Activated T-helper 1 cell treated with anti-CD3 and anti-CD28 coated beads, Interleukin-12 subunit alpha, Interleukin-12 subunit beta, Interleukin-2, Interleukin-4 antibody, amounts not matched to agents 30 ng/mL and 10 ng/mL and 1 ng/mL, durations not matched to agents 14 hours and 24 hours and 36 hours (primary cell): ENCODE measurements at regions of chr7 and their contacts with region 1.

Region 1: DNA sequence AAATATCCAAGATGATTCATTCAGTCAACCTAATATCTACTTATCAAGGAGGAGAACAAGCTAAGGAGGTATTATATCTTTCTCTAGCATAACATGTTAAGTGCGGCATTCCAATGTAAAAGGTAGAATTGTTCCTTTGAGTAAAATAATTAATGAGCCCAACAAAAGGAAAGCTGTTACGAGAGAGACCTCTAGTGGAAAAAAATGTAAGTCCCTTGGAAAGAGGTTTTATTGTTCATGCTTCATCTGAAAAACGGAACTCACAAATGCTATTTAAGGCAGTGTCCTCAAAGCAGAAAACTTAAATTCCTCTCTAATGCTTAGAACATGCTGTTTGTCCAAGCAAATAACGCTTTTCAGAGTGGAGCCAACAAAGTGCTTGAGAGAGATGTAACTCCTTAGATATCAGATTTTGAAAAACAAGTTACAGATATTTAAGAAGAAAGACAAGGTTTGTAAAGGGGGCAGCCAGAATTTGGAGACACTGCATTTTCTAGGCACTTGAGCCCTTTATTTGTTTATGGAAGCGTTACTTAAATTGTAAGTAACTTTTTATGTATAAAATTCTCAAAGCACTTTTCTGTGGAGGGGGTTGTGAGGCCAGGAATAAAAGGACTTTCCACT is 119.9 kb downstream of the TFEC start:
- DNase-seq: no peak
- H3K4me3 Mint-ChIP-seq: no peak overlapping the region
- H3K27ac Mint-ChIP-seq: no peak overlapping the region
- H3K4me1 Mint-ChIP-seq: no peaks in the 10 kb centered on the region
- H3K27me3 Mint-ChIP-seq: peaks cover 3% of the 10 kb centered on the region

Region 2: DNA sequence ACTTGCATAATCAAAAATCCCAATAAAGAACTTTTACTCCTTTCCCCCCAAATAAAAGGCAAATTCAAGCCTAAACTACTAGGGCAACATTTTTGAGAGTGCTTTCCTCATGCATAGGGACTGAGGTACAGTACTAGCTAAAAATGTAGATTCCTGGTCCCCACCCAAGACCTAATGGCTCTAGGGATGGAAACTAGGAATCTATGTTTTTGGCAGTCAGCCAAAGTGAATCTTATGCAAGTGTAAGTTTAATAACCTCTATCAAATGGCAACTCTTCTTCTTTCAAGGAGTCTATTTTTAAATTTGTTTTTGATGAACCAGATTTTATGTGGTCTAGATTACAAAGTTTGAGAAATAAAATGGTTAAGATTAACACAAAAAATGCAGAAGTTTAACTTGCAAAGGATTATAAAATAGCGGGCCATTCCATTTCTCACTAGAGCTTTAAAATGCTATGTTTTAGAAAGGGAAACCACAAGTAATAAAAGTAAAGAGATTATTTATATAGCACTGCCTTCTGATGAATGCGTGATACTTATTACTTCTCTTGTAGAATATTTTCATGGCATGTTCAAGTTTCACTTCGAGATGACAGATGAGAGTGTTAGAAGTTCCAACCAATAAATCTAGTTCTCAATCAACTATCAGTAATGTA is 1059.1 kb before region 1 on chr7:
- intact Hi-C with region 1: loop called (anchors 5 kb)
- DNase-seq: no peak
- H3K4me3 Mint-ChIP-seq: no peak overlapping the region
- H3K27ac Mint-ChIP-seq: no peak overlapping the region
- H3K4me1 Mint-ChIP-seq: no peaks in the 10 kb centered on the region
- H3K27me3 Mint-ChIP-seq: no peaks in the 10 kb centered on the region

Region 3: DNA sequence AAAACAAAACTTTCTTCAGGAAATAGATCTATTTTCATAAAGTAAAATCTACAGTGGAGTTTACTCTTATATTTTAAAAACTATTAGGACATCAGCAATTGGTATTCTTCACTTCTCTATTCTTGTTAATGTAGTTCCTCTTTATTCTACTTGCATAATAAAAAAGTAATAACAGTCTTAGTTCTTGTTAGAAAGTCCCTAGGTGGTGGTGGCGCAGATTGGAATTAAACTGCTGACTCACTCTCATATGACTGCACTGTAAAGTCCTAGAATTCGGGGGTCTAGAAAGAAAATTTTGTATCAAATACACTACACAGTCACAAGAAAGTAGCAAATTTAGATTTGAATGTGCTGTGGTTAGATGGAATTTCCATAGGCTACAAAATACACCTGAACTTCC is 255.1 kb after region 1 on chr7:
- intact Hi-C with region 1: no loop called
- DNase-seq: no peak
- H3K4me3 Mint-ChIP-seq: no peak overlapping the region
- H3K27ac Mint-ChIP-seq: no peak overlapping the region
- H3K4me1 Mint-ChIP-seq: peaks cover 6% of the 10 kb centered on the region
- H3K27me3 Mint-ChIP-seq: peaks cover 12% of the 10 kb centered on the region